Left ventricle myocardium superior (tissue), 1 donor: ENCODE measurements at regions of chr4 and their contacts with region 1.

Region 1: DNA sequence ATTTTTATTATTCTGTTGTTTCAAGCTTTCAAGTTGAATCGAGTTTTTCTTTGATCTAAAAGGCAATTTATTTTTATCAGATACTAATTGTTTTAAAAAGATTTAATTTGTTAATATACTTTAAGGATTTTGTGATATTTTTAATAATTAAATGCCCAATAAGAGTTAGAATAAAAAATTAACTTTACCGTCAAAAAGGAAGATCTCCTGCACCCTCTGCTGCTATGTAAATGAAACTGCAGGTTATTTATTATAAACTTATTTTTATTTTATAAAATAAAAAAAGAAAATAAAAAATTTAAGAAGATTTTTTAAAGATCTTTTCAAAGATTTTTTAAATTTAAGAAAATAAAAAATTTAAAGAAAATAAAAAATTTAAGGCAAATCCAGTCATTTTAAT is 166.1 kb downstream of the CCSER1 start:
- DNase-seq: no peak
- ATAC-seq: no peak

Region 2: GRCh38 chr4:90025248-90025647 is 268.1 kb before region 1 on chr4:
- intact Hi-C with region 1: loop called (anchors 10 kb)
- DNase-seq: no peak
- ATAC-seq: no peak

Region 3: DNA sequence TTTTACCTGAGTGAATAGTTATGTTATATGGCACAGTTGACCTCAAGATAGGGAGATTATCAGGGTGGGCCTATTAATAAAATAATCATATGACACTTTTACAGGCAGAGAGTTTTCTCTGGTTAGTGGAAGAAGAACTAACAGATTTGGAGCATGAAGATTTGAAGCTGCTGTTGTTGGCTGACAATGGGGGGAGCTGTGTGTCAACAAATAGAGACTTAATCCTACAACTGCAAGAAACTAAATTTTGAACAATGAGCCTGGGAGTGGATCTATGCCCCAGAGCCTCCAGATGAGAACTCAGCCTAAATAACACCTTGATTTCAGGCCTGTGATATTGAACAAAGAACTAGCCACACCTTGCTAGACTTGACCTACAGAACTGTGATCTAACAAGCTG is 173.3 kb before region 1 on chr4:
- intact Hi-C with region 1: loop called (anchors 5 kb)
- DNase-seq: no peak
- ATAC-seq: peak; percentile 57

Region 4: GRCh38 chr4:90695411-90695810 is 402.1 kb after region 1 on chr4:
- intact Hi-C with region 1: no loop called
- DNase-seq: no peak
- ATAC-seq: no peak